Naive thymus-derived CD4-positive, alpha-beta T cell (primary cell): ENCODE measurements at regions of chr15 and their contacts with region 1.

Region 1: DNA sequence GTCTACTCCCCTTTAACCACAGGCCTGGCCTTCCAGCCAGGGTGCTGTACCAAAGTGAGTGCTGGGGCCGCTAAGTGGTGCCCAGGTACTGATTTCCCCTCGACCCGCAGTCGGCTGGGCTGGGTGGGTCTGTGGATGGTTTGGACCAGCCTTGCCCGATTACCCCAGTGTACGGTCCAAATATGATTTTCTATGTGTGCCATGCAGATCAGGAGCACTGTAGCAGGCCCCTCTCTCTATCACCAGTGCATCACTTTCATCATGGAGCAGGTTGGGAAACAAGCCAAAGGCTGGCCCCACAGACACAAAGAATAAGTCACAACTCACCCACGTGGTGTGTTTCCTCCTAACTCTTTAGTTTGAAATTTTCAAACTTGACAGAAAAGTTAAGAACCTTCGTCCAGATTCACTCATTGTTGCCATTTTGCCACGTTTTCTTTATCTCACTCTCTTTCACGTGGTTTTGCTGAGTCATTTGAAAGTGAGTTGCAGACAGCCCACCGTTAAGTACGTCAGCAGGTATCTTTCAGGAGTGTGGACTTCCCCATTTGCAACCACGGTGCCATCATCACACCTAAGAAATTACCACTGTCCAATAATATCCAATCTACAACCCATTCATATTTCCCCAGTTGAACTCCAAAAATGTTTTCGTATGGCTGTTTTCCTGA is 37.0 kb downstream of the ZNF710 start:
- DNase-seq: peak in 2 of 9 donors; percentile 34 to 47
- ATAC-seq: peak; percentile 57
- H3K4me3 ChIP-seq: no peak overlapping the region
- H3K4me3 Mint-ChIP-seq: peak overlapping the region in 3 of 10 donors; percentile 29 to 45 (median 29)
- H3K27ac ChIP-seq: no peak overlapping the region
- H3K27ac Mint-ChIP-seq: peak overlapping the region in 6 of 9 donors; percentile 11 to 81 (median 43)
- H3K4me1 ChIP-seq: peaks cover 28 to 29% of the 10 kb centered on the region in 2 donors
- H3K4me1 Mint-ChIP-seq: peaks cover 40 to 80% (median 56%) of the 10 kb centered on the region in 7 donors
- H3K27me3 ChIP-seq: no peaks in the 10 kb centered on the region
- H3K27me3 Mint-ChIP-seq: no peaks in the 10 kb centered on the region

Region 2: GRCh38 chr15:89828241-89829082 is 209.6 kb before region 1 on chr15:
- CTCF ChIA-PET with region 1: no interaction called
- POLR2A ChIA-PET with region 1: no interaction called
- intact Hi-C with region 1: no loop called
- DNase-seq: no peak
- ATAC-seq: peak; percentile 53
- H3K4me3 ChIP-seq: no peak overlapping the region
- H3K4me3 Mint-ChIP-seq: no peak overlapping the region
- H3K27ac ChIP-seq: no peak overlapping the region
- H3K27ac Mint-ChIP-seq: no peak overlapping the region
- H3K4me1 ChIP-seq: no peaks in the 10 kb centered on the region
- H3K4me1 Mint-ChIP-seq: peaks cover 0 to 16% (median 0%) of the 10 kb centered on the region in 7 donors
- H3K27me3 ChIP-seq: no peaks in the 10 kb centered on the region
- H3K27me3 Mint-ChIP-seq: peaks cover 0 to 6% (median 0%) of the 10 kb centered on the region in 5 donors

Region 3: DNA sequence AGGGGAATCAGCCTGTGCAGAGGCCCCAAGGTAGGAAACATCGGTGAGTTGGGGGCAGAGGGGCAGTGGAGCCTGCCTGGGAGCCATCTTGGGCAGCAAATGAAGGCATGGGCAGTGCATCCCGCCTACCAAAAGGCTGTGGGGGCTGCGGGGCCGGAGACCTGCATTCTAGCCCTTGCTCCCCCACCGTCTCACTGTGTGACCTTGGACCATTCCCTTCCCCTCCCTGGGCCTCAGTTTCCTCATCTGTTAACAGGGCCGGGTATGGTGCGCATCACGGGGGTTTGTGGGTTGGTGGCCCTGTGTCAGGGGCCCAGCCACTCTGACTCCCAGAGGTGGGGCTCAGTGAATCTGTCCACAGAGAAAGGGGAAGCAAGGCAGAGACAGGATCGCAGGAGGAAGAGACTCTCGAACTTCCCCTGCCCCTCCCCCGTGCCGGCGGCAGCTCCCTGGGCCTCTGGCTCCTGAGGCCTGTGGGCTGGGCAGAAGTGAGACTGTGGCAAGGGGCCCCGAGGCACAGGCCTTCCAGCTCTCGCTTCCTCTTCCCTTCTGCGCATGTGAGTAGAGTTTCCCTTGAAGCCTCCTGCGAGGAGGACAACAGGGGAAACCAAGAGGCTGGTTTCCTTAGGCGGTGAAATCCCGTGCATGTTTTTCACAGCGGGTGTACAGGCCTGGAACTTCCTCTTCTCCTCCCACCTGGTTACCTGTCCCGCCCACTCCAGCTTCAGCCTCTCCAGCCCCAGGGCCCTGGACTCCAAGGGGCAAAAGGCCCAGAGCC is 21.3 kb after region 1 on chr15:
- CTCF ChIA-PET with region 1: interaction called, 3 read pairs
- POLR2A ChIA-PET with region 1: interaction called, 3 read pairs
- intact Hi-C with region 1: loop called (anchors 2 kb)
- DNase-seq: peak; percentile 58 to 80 (median 64)
- ATAC-seq: peak; percentile 90
- H3K4me3 ChIP-seq: no peak overlapping the region
- H3K4me3 Mint-ChIP-seq: peak overlapping the region; percentile 29 to 69 (median 52)
- H3K27ac ChIP-seq: peak overlapping the region; percentile 68
- H3K27ac Mint-ChIP-seq: peak overlapping the region; percentile 84 to 94 (median 90)
- H3K4me1 ChIP-seq: peaks cover 15 to 33% of the 10 kb centered on the region in 2 donors
- H3K4me1 Mint-ChIP-seq: peaks cover 38 to 67% (median 55%) of the 10 kb centered on the region in 7 donors
- H3K27me3 ChIP-seq: no peaks in the 10 kb centered on the region
- H3K27me3 Mint-ChIP-seq: no peaks in the 10 kb centered on the region